Heart right ventricle (tissue), 16 donors: ENCODE measurements at regions of chr2 and their contacts with region 1.

Region 1: GRCh38 chr2:20933714-20934113 is 110.2 kb downstream of the APOB start:
- DNase-seq: no peak
- ATAC-seq: no peak
- H3K4me3 ChIP-seq: no peak overlapping the region
- H3K27ac ChIP-seq: no peak overlapping the region
- H3K4me1 ChIP-seq: peaks cover 0 to 13% (median 0%) of the 10 kb centered on the region in 9 donors
- H3K27me3 ChIP-seq: no peaks in the 10 kb centered on the region
- CTCF ChIP-seq: no peak

Region 2: DNA sequence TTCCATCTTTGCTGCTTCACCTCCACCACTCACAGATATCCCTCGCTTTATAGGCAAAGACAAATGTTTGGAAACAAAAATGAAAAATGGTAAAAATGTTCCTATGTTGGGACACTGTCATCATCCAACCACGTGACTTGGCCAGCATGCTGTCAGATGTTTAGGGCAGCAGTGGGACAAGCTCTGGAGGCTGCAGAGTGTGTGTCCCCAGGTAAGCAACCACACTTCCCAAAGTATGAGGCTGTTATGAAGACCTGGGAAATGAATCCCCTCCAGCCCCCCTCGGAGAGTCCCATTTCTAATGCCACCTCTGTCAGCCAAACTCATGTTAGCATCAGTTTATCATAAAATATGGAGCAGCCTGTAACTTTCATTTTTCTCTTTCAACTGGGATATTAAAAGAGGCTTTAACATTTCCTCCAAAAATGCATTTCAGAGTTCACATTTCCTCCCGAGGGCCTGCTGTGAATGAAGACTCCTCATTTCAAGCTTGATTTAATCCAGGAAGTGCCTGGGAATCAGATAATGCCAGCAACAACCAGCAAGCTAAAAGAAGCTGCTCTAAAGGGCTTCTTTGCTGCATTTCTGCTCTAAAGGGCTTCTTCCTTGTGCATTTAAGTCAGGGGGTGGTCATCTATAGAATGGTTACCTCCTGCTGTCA is 43.9 kb after region 1 on chr2:
- intact Hi-C with region 1: loop called in 1 of 10 experiments (anchors 2 kb)
- DNase-seq: no peak
- ATAC-seq: no peak
- H3K4me3 ChIP-seq: no peak overlapping the region
- H3K27ac ChIP-seq: no peak overlapping the region
- H3K4me1 ChIP-seq: peaks cover 0 to 9% (median 0%) of the 10 kb centered on the region in 9 donors
- H3K27me3 ChIP-seq: no peaks in the 10 kb centered on the region
- CTCF ChIP-seq: no peak